ENCODE measurements at regions of chr13 and their contacts with region 1.

Region 1: DNA sequence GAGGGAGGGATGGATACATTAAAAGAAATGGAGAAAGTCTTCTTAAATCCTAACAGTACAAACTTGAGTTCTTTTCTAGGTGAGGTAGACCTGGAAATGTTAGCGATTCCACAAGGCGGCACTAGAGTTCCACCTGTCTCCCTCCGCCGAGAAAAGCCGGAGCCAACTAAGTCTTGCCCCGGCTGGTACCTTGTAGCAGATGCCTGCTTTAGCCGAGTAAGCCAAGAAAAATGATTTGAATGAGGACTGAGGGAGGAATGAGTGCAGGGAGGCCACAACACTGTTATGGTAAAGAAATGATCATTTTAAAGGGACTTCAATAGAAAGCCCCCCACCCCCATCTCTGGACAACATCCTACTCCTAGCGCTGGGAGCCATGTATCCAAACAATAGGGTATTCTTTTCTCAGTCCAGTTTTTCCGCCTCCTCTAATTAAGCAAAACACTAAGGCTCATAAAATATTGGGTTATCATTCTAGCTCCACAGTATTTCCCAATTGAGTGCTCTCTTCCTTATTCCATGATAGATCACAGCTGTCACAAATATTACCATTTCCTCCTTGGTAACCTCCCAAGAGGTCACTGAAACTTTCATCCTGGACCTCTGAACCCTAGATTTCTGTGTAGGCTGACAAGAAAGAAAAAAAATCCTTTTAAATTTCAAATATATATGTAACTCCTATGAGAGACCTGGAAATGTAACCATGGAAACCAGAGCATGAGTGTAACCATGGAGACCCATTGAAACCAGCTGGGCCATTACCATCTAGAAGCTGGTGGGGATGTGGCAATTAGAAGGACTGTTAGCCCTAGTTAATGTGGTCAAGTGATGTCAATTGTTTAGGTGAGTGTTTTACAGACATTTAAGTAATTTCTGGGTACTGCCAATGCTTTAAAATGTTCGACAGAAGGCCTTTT is 58.3 kb downstream of the GPALPP1 start:
- DNase-seq: peak; percentile 74
- ATAC-seq: peak; percentile 87 to 92

Region 2: GRCh38 chr13:45280751-45281634 is 233.3 kb after region 1 on chr13:
- intact Hi-C with region 1: loop called in 1 of 2 experiments (anchors 1 kb)
- DNase-seq: peak; percentile 65
- ATAC-seq: peak; percentile 96 to 99

Region 3: DNA sequence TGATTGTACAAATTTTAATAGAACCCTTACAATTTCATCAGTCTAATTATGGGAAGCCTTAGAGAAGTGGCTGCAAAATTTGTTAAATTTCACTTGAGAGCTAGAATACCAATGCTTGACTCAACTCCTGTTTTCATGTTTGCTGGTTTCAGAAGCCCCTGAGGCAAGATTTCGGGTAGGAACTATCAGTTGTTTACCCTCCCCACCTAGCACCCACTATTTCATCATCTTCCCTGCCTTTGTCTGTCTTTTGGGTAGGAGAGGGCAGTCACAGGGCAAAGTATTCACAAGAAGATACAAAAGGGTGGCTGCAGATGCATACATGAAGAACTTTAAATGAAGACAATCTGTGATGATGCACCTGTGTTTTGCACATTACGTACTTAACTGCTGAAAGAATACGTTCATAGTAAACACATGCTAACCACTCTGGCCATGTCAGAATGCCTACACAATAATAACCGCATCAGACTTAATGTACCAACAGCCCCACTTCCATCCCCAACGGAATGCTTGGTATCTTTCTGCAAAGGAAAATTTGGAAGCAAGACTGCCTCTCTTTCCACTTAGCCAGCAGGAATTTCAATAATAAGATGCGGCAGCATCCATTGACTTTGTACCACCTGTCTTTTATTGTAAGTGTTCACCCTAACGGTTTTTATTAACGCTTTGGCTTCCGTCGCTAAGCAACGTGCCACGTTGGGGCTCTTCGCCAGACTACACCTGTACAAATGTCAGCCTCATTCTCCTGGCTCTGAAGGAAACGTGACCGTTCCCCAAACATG is 262.9 kb after region 1 on chr13:
- intact Hi-C with region 1: loop called (anchors 1 to 5 kb)
- DNase-seq: no peak
- ATAC-seq: no peak

Region 4: GRCh38 chr13:45385907-45386553 is 338.4 kb after region 1 on chr13:
- intact Hi-C with region 1: no loop called
- DNase-seq: no peak
- ATAC-seq: peak; percentile 34 to 65